ENCODE measurements at regions of chr1 and their contacts with region 1.

Region 1: DNA sequence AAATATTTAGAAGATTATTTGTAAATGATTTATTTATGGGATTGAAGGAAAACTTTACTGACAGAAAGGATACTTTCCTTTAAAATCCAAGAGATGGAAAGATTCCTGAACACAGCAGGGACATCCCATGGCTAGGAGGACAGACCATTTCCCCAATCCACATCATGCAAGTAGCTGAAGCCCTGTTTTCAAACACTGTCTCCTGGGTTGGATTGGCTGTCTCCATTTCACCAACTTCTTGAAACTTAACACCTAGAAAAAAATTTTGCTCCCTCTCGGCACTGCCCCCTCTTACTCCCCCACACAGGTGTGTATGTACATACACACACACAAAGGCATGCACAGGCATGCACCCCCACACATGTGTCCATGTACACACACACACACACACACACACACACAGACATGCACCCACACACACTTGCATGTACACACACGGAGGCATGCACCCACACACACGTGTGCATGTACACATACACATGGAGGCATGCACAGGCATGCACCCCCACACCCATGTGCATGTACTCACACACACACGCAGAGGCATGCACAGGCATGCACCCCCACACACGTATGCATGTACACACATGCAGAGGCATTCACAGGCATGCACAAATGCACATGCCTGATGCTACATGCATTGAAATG is 320.0 kb downstream of the CHRM3 start:
- DNase-seq: no peak
- ATAC-seq: no peak
- H3K4me3 Mint-ChIP-seq: no peak overlapping the region
- H3K27ac Mint-ChIP-seq: no peak overlapping the region
- H3K4me1 Mint-ChIP-seq: peaks cover 18% of the 10 kb centered on the region
- H3K27me3 Mint-ChIP-seq: no peaks in the 10 kb centered on the region

Region 2: DNA sequence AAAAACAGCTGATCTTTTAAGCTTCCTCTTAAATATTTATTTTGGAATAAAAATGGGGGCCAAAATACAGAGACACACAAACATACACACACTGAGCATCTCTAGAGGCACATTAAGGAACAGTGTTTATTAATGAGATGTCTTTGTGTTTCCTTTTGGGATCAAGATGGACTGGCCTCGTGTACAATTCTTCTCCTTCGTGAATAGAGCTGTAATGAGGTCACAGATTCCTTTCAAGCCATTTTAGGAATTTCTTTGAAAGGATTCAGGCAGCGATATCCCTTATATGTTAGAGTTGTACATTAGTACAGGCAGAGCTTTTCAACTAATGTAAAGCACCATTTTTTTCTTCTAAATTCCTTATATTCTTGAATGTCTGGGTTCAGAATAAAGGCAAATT is 24.3 kb before region 1 on chr1:
- CTCF ChIA-PET with region 1: no interaction called
- POLR2A ChIA-PET with region 1: no interaction called
- DNase-seq: no peak
- ATAC-seq: no peak
- H3K4me3 Mint-ChIP-seq: no peak overlapping the region
- H3K27ac Mint-ChIP-seq: no peak overlapping the region
- H3K4me1 Mint-ChIP-seq: no peaks in the 10 kb centered on the region
- H3K27me3 Mint-ChIP-seq: no peaks in the 10 kb centered on the region

Region 3: GRCh38 chr1:239719642-239720258 is 13.4 kb after region 1 on chr1:
- CTCF ChIA-PET with region 1: interaction called, 24 read pairs
- POLR2A ChIA-PET with region 1: interaction called, 25 read pairs
- DNase-seq: peak; percentile 85
- ATAC-seq: peak; percentile 83
- H3K4me3 Mint-ChIP-seq: no peak overlapping the region
- H3K27ac Mint-ChIP-seq: peak overlapping the region; percentile 96
- H3K4me1 Mint-ChIP-seq: peaks cover 31% of the 10 kb centered on the region
- H3K27me3 Mint-ChIP-seq: no peaks in the 10 kb centered on the region